Activated CD8-positive, alpha-beta memory T cell treated with anti-CD3 and anti-CD28 coated beads, Interleukin-2, amount 10 ng/mL, durations not matched to agents 7 days and 5 days (primary cell): ENCODE measurements at regions of chr1 and their contacts with region 1.

Region 1: DNA sequence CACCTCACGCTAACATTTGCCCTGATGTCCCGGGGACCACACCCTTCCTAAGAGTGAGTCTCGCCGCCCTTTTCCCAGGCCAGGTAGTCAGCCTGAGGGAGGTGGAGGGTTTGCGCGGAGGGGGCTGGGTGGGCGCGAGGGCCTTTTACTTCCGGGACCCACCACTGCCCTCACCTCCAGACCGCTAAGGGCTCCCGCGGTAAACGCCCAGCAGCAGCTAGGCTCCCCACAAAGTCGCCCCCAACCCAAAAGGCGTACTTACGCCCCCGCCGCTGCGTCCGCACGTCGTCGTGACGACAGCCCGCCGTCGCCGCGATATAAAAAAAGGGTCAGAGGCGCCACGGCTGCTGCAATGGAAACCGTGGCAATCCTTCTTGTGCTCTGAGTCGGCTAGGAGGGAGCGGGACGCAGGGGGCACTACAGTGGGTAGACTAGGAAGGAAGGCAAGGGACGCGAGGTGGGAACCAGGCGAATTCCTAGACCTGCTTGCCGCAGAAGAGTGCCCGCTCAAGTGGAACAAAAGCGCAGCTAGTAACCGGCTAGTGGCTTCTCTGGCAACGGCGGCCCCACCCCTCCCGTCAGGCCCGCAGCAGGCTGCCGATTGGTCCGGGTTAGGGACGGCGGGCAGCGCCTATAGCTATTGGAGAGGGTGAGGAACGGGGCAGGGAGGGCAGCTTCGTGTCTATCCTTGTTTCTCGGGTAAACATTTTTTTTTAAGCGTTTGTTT is at the start of gene ODF2L:
- DNase-seq: peak; percentile 96
- ATAC-seq: peak; percentile 100
- H3K4me3 Mint-ChIP-seq: peak within 1 kb of the TSS; percentile 90
- H3K27ac Mint-ChIP-seq: peak within 1 kb of the TSS; percentile 90
- H3K4me1 Mint-ChIP-seq: peaks cover 48% of the 10 kb centered on the region
- H3K27me3 Mint-ChIP-seq: no peaks in the 10 kb centered on the region
- total RNA-seq, gene ODF2L: 45.6 to 69.2 TPM

Region 2: DNA sequence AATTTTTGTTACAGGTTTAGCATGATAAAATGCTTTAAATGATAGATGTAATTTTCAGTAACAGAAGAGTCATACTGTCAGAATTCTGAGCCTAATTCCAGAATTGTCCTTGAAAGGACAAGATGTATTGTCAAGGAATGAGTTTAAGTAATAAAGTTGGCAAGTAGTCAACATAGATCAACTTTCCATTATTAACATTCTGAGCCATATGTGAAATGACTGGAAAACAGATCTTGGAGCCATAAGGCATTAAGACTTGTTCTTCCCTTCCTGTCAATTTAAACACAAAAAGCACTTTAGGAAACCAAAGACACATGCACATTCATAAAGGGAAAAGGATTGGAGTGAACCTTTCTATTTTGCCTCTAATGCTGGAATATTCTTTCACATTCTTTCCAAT is 106.8 kb before region 1 on chr1:
- CTCF ChIA-PET with region 1: no interaction called
- DNase-seq: no peak
- ATAC-seq: no peak
- H3K4me3 Mint-ChIP-seq: no peak overlapping the region
- H3K27ac Mint-ChIP-seq: no peak overlapping the region
- H3K4me1 Mint-ChIP-seq: no peaks in the 10 kb centered on the region
- H3K27me3 Mint-ChIP-seq: no peaks in the 10 kb centered on the region

Region 3: GRCh38 chr1:86339014-86339812 is 56.7 kb before region 1 on chr1:
- CTCF ChIA-PET with region 1: no interaction called
- DNase-seq: no peak
- ATAC-seq: no peak
- H3K4me3 Mint-ChIP-seq: no peak overlapping the region
- H3K27ac Mint-ChIP-seq: no peak overlapping the region
- H3K4me1 Mint-ChIP-seq: no peaks in the 10 kb centered on the region
- H3K27me3 Mint-ChIP-seq: no peaks in the 10 kb centered on the region

Region 4: DNA sequence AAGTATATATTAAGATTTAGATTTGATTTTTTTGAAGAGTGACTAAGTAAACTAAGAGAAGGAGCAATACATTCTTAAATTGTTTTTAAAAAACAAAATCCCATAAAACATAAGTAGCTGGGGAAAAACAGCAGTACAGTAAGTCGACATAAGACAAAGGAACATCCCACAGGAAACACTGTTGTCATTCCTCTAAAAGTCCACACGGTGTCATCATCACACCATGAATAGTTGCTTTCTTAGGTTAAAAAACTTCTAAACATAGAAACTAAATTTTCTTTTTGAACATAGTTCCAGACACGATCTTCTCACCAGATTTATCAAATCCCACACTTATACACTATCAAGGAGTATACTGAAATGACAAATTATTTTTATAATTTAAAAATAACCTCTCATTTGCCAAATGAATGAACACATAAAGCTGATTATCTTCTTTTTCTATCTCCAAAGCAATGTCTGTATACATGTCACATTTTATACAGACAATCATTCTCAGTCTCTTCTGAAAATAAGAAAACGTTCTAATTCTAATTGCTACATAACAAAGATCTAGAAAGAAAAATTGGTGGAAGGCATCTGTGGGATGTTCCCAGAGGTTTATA is 15.6 kb before region 1 on chr1:
- CTCF ChIA-PET with region 1: interaction called, 17 read pairs
- DNase-seq: no peak
- ATAC-seq: peak; percentile 72
- H3K4me3 Mint-ChIP-seq: no peak overlapping the region
- H3K27ac Mint-ChIP-seq: no peak overlapping the region
- H3K4me1 Mint-ChIP-seq: peaks cover 16% of the 10 kb centered on the region
- H3K27me3 Mint-ChIP-seq: no peaks in the 10 kb centered on the region